GM12878 (cell line): ENCODE measurements at regions of chr18 and their contacts with region 1.

Region 1: DNA sequence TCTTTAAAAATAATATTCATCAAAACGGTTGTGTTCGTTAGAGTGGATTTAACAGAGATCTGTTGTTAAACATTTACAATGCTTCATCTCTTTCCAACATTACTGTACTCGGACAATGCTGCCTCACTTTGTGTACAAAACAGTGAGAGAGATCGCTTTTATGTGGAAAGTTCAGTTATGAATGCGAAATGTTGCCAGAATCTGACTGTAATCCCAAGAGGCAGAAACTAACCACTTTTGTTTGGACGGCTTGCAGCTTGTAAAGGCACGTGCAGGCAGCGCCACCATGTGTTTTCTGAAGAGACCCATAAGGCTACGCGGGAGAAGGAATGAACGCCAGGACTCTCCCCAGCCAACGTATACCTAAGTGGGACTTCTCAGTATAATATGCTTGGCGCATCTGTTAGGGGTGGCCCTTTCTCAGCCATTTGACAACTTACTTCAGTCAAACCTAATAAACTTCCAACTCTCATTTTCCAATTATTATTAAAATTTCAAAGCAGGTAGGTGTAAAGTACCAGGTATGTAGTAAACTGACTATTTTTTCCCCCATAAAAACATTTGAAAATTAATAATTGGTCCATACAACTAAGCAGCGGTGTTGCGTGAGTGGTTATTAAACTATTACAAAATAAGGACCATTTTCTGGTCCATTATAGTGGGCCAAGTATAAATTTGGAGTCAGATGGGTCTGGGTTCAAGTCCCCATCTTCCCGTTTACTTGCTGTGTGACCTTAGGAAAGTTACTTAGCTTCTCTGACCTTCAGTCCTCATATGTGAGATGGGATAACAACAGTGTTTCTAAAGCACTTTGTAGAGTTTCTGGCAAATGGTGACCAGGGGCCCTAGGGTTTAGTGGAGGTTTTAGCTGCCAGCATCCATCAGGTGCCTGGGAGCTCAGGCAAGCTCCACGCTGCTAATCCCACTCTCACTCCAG is 5.6 kb upstream of the NAPG start:
- DNase-seq: peak; percentile 53
- ATAC-seq: peak; percentile 97
- H3K4me3 ChIP-seq: no peak overlapping the region
- H3K27ac ChIP-seq: no peak overlapping the region
- H3K4me1 ChIP-seq: peaks cover 6% of the 10 kb centered on the region
- H3K27me3 ChIP-seq: peaks cover 1 to 4% of the 10 kb centered on the region in 2 experiments; a peak in 1 of 4 replicates
- CTCF ChIP-seq: peak; percentile 86 to 92 (median 88)
- EP300 ChIP-seq: no peak
- POLR2A ChIP-seq: no peak
- RAD21 ChIP-seq: peak; percentile 98

Region 2: GRCh38 chr18:9971313-9971920 is 548.9 kb before region 1 on chr18:
- CTCF ChIA-PET with region 1: interaction called, 109 read pairs
- POLR2A ChIA-PET with region 1: no interaction called
- RAD21 ChIA-PET with region 1: interaction called, 53 read pairs
- SMC1A ChIA-PET with region 1: interaction called, 76 read pairs
- in situ Hi-C with region 1: loop called (anchors 5 kb)
- intact Hi-C with region 1: loop called (anchors 1 kb)
- DNase-seq: peak; percentile 27
- ATAC-seq: peak; percentile 85
- H3K4me3 ChIP-seq: no peak overlapping the region
- H3K27ac ChIP-seq: no peak overlapping the region
- H3K4me1 ChIP-seq: no peaks in the 10 kb centered on the region
- H3K27me3 ChIP-seq: no peaks in the 10 kb centered on the region; a peak in 2 of 4 replicates
- CTCF ChIP-seq: peak; percentile 53 to 92 (median 67); a peak in 5 of 6 replicates
- EP300 ChIP-seq: no peak
- POLR2A ChIP-seq: no peak
- RAD21 ChIP-seq: peak; percentile 98

Region 3: GRCh38 chr18:10465174-10465939 is 54.9 kb before region 1 on chr18:
- CTCF ChIA-PET with region 1: interaction called, 3 read pairs
- POLR2A ChIA-PET with region 1: no interaction called
- RAD21 ChIA-PET with region 1: no interaction called
- SMC1A ChIA-PET with region 1: no interaction called
- in situ Hi-C with region 1: loop called (anchors 5 kb)
- intact Hi-C with region 1: no loop called
- DNase-seq: no peak
- ATAC-seq: no peak; the same call in 2 of the 3 replicates
- H3K4me3 ChIP-seq: no peak overlapping the region
- H3K27ac ChIP-seq: no peak overlapping the region
- H3K4me1 ChIP-seq: no peaks in the 10 kb centered on the region
- H3K27me3 ChIP-seq: peaks cover 2 to 6% of the 10 kb centered on the region in 2 experiments; a peak in 3 of 4 replicates
- CTCF ChIP-seq: no peak
- EP300 ChIP-seq: no peak
- POLR2A ChIP-seq: no peak
- RAD21 ChIP-seq: no peak

Region 4: DNA sequence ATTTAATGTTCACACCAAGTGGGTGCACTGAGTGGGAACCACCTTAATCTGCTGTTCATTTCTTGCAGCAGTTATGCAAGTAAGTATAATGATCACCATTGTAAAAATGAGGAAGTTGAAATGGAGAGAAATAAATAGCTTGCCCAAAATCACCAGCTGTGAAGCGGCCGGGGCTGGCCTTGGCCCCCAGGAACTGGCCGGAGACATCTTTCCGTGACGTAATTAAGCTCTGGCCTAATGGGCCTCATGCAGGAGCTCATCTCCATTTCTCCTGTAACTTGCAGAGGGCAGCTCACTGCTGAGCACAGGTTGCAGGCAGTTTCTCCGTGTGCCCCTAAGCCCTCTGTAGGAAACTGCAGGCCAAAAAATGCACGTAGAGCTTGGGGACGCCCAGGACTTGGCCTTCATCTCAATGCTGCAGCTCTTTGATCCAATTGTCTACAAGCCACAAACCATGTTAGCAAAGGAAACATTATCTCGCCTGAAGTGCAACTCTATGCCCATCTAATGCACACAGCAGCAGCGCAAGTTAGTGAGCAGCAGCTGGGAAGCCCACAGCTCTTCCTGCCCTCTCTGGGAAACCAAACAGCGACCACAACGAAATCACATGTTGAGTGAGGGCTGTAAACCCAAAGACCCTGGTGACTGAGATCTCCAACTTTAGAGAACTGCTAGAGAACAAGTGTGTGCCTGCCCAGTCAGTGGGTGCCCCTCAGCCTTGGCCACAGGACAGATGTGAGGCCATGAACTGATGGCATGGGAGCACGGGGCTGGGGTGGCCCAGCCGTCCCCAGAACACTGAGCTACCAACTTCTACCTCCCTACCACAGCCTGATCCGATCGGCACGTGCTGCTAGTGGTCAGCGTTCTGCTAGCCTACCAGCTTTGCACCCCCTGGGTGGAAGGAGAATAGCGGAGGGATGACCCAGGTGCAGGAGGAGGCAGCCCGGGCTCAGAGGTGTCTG is 37.0 kb before region 1 on chr18:
- CTCF ChIA-PET with region 1: interaction called, 12 read pairs
- POLR2A ChIA-PET with region 1: interaction called, 6 read pairs
- RAD21 ChIA-PET with region 1: interaction called, 11 read pairs
- SMC1A ChIA-PET with region 1: interaction called, 20 read pairs
- in situ Hi-C with region 1: no loop called
- intact Hi-C with region 1: no loop called
- DNase-seq: peak; percentile 73
- ATAC-seq: peak; percentile 90
- H3K4me3 ChIP-seq: peak overlapping the region; percentile 10; the same call in 1 of the 2 replicates
- H3K27ac ChIP-seq: peak overlapping the region; percentile 70
- H3K4me1 ChIP-seq: peaks cover 22% of the 10 kb centered on the region
- H3K27me3 ChIP-seq: no peaks in the 10 kb centered on the region; a peak in 1 of 4 replicates
- CTCF ChIP-seq: no peak
- EP300 ChIP-seq: peak; percentile 71 to 83; a peak in 3 of 4 replicates
- POLR2A ChIP-seq: no peak
- RAD21 ChIP-seq: no peak

Region 5: DNA sequence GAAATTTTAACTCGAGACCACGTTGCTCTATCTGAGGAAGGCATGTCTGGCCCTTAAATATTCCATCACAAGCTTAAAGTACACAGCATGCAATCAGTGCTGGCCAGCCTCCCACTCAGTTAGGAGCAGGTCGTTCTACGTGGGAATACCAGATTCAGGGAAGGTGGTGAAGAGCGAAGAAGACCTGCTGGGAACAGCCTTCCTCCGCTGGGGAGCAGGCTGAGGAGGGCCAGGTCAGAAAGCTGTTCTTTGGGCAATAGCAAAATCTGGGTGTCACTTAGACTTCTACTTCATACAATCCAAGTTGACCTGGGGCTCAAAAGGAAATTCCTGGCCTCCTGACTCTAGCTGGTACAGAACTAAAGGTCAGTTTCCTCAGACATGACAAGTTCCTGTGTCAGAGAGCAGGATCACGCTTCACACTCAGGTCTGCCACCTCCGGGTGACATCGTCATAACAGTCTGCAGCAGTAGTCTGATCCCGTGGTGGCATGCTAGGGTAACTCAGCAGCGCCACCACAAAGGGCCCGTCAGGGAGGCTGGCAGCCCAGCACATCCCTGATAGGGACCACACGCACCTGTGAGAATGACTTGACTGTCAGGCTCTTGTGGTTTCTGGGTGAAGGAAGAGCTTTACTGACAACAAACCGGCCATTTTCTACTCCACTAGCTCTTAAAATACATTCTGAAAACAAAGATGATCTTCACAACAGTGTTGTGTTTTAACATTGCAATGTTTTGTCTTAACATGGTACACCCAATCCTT is 29.7 kb before region 1 on chr18:
- CTCF ChIA-PET with region 1: interaction called, 39 read pairs
- POLR2A ChIA-PET with region 1: no interaction called
- RAD21 ChIA-PET with region 1: interaction called, 6 read pairs
- SMC1A ChIA-PET with region 1: interaction called, 14 read pairs
- in situ Hi-C with region 1: no loop called
- intact Hi-C with region 1: no loop called
- DNase-seq: peak; percentile 58
- ATAC-seq: peak; percentile 100
- H3K4me3 ChIP-seq: no peak overlapping the region
- H3K27ac ChIP-seq: no peak overlapping the region
- H3K4me1 ChIP-seq: peaks cover 3% of the 10 kb centered on the region; the same call in 1 of the 2 replicates
- H3K27me3 ChIP-seq: no peaks in the 10 kb centered on the region; a peak in 1 of 4 replicates
- CTCF ChIP-seq: peak; percentile 65 to 78 (median 78)
- EP300 ChIP-seq: peak in 1 of 2 experiments; percentile 10; a peak in 1 of 4 replicates
- POLR2A ChIP-seq: no peak
- RAD21 ChIP-seq: peak; percentile 53; the same call in 1 of the 2 replicates